Heart left ventricle (tissue), 16 donors: ENCODE measurements at regions of chr11 and their contacts with region 1.

Region 1: GRCh38 chr11:46315033-46315738 is 32.1 kb upstream of the DGKZ start:
- DNase-seq: peak in 4 of 5 donors; percentile 53 to 79 (median 67)
- ATAC-seq: peak in 3 of 4 donors; percentile 32 to 54 (median 43)
- H3K4me3 ChIP-seq: no peak overlapping the region
- H3K27ac ChIP-seq: peak overlapping the region in 9 of 12 donors; percentile 6 to 73 (median 58)
- H3K4me1 ChIP-seq: peaks cover 0 to 42% (median 7%) of the 10 kb centered on the region in 12 donors
- H3K27me3 ChIP-seq: no peaks in the 10 kb centered on the region
- CTCF ChIP-seq: peak; percentile 77 to 87 (median 81)
- POLR2A ChIP-seq: no peak

Region 2: DNA sequence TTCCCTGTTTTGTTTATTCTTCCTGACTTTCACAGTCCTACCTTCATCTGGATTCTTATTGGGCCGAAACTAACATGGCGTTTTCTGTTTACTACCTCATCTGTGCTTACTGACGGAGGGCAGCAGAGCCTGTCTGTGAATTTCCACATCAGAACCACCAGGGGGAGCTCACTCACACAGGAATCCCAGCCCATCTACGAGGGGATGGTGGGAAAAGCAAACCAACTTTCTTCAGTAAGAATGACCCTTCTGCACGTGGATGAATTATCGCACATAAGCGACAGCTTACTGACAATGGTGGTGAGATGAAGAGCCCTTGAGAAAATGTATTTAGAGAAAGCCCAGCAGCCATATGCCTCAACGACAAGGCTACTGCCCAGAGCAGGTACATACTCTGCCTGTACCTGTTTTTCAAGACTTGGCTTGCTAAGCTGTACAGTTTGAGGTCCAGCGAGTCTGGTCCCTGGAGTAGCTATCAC is 350.2 kb before region 1 on chr11:
- intact Hi-C with region 1: loop called in 1 of 10 experiments (anchors 10 kb)
- DNase-seq: peak in 4 of 5 donors; percentile 35 to 63 (median 52)
- ATAC-seq: peak; percentile 68 to 93 (median 88)
- H3K4me3 ChIP-seq: no peak overlapping the region
- H3K27ac ChIP-seq: peak overlapping the region in 2 of 12 donors; percentile 13
- H3K4me1 ChIP-seq: peaks cover 0 to 18% (median 4%) of the 10 kb centered on the region in 12 donors
- H3K27me3 ChIP-seq: no peaks in the 10 kb centered on the region
- CTCF ChIP-seq: peak; percentile 86 to 97 (median 89)
- POLR2A ChIP-seq: no peak

Region 3: DNA sequence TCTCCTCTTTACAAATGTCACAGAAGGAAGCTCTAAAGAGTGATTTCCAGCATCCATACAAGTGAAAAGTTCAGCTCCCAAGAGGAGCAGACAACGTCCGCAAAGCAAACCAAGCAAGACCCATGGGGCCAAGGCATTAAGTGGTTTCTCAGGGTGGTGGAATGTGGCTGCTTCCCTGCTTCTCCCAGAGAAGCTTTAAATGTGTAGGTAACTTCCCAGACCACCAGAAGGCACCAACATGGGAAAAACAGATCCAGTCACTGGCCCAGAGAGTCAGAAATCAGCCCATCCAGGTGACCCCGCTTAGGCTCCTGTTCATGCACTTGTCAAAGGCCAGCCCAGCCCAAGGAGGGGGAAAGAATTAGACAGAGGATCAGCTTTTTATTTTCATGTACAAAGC is 180.6 kb before region 1 on chr11:
- intact Hi-C with region 1: loop called in 4 of 10 experiments (anchors 10 kb)
- DNase-seq: no peak
- ATAC-seq: no peak
- H3K4me3 ChIP-seq: no peak overlapping the region
- H3K27ac ChIP-seq: no peak overlapping the region
- H3K4me1 ChIP-seq: peaks cover 0 to 13% (median 0%) of the 10 kb centered on the region in 12 donors
- H3K27me3 ChIP-seq: no peaks in the 10 kb centered on the region
- CTCF ChIP-seq: no peak
- POLR2A ChIP-seq: no peak

Region 4: GRCh38 chr11:46367244-46367915 is 52.2 kb after region 1 on chr11:
- intact Hi-C with region 1: loop called in 1 of 10 experiments (anchors 5 kb)
- DNase-seq: peak; percentile 68 to 87 (median 74)
- ATAC-seq: peak; percentile 27 to 59 (median 36)
- H3K4me3 ChIP-seq: peak overlapping the region in 1 of 12 donors; percentile 7
- H3K27ac ChIP-seq: peak overlapping the region in 5 of 12 donors; percentile 0 to 46 (median 24)
- H3K4me1 ChIP-seq: peaks cover 10 to 55% (median 42%) of the 10 kb centered on the region in 12 donors
- H3K27me3 ChIP-seq: no peaks in the 10 kb centered on the region
- CTCF ChIP-seq: peak; percentile 88 to 96 (median 92)
- POLR2A ChIP-seq: no peak